Esophagus muscularis mucosa (tissue), 4 donors: ENCODE measurements at regions of chr3 and their contacts with region 1.

Region 1: GRCh38 chr3:121202573-121202972 is 294.6 kb downstream of the STXBP5L start:
- DNase-seq: no peak
- H3K4me3 ChIP-seq: no peak overlapping the region
- H3K27ac ChIP-seq: no peak overlapping the region
- H3K4me1 ChIP-seq: no peaks in the 10 kb centered on the region
- H3K27me3 ChIP-seq: no peaks in the 10 kb centered on the region
- CTCF ChIP-seq: no peak
- EP300 ChIP-seq: no peak
- POLR2A ChIP-seq: no peak

Region 2: DNA sequence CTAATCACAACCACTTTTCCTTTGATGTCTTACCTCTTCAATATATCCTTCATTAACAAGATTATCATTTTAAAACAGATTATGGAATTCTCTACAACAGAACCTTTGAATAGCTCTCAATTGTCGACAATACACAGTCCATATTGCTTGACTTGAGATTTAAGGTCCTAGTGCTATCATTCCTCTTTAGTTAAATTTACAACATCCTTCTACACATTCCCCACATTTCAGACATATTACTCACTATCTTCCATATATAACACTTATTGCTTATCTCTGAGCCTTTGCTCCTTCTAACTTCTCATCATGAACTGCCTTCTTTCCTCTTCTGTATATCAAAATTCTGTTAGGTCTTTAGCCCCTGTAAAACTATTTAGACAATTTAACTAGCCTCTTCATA is 47.5 kb before region 1 on chr3:
- intact Hi-C with region 1: no loop called
- DNase-seq: no peak
- H3K4me3 ChIP-seq: no peak overlapping the region
- H3K27ac ChIP-seq: no peak overlapping the region
- H3K4me1 ChIP-seq: no peaks in the 10 kb centered on the region
- H3K27me3 ChIP-seq: no peaks in the 10 kb centered on the region
- CTCF ChIP-seq: no peak
- EP300 ChIP-seq: no peak
- POLR2A ChIP-seq: no peak

Region 3: GRCh38 chr3:121855555-121855954 is 653.0 kb after region 1 on chr3:
- intact Hi-C with region 1: loop called (anchors 10 kb)
- DNase-seq: no peak
- H3K4me3 ChIP-seq: no peak overlapping the region
- H3K27ac ChIP-seq: no peak overlapping the region
- H3K4me1 ChIP-seq: no peaks in the 10 kb centered on the region
- H3K27me3 ChIP-seq: no peaks in the 10 kb centered on the region
- CTCF ChIP-seq: no peak
- EP300 ChIP-seq: no peak
- POLR2A ChIP-seq: no peak